ENCODE measurements at regions of chr11 and their contacts with region 1.

Region 1: DNA sequence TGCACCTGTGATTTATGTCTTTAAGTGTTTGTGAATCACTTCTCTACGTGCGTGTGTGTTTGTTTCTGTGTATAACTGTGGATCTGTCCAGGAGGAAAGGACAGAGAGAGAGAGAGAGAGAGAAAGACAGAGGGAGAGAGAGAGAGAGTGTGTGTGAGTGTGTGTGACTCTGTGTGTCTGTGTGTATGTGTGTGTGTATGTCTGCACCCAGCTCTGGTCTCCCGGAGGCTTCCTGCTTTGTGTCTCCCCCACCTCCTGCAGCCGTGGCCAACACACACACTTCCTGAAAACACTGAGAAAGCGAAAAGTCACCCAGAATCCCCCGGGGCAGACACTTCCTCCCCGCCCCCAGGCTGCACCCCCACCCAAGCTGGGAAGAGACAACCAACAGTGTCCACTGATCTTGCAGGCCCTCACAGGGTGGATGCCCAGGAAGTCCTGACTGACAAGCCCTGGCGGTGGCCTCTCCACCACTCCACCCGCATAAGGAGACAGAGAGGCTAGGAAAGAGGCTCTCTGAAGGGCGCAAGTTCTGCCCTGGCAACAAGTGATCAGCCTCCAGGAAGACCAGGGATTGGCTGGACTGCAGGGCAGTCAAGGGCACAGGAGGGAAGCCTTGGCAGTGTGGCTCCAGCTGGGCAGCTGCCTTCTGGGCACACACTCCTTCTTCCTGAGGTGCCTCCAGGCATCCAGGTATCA is 30.0 kb downstream of the ARAP1 start:
- DNase-seq: peak; percentile 91
- H3K4me3 Mint-ChIP-seq: peak overlapping the region; percentile 90
- H3K27ac Mint-ChIP-seq: peak overlapping the region; percentile 91
- H3K4me1 Mint-ChIP-seq: peaks cover 51% of the 10 kb centered on the region
- H3K27me3 Mint-ChIP-seq: no peaks in the 10 kb centered on the region

Region 2: GRCh38 chr11:72743321-72744221 is 21.4 kb after region 1 on chr11:
- CTCF ChIA-PET with region 1: interaction called, 24 read pairs
- POLR2A ChIA-PET with region 1: no interaction called
- intact Hi-C with region 1: no loop called
- DNase-seq: no peak
- H3K4me3 Mint-ChIP-seq: no peak overlapping the region
- H3K27ac Mint-ChIP-seq: peak overlapping the region; percentile 76
- H3K4me1 Mint-ChIP-seq: peaks cover 64% of the 10 kb centered on the region
- H3K27me3 Mint-ChIP-seq: no peaks in the 10 kb centered on the region

Region 3: GRCh38 chr11:72760539-72761405 is 38.6 kb after region 1 on chr11:
- CTCF ChIA-PET with region 1: interaction called, 4 read pairs
- POLR2A ChIA-PET with region 1: no interaction called
- intact Hi-C with region 1: loop called (anchors 5 kb)
- DNase-seq: no peak
- H3K4me3 Mint-ChIP-seq: no peak overlapping the region
- H3K27ac Mint-ChIP-seq: no peak overlapping the region
- H3K4me1 Mint-ChIP-seq: peaks cover 20% of the 10 kb centered on the region
- H3K27me3 Mint-ChIP-seq: no peaks in the 10 kb centered on the region

Region 4: GRCh38 chr11:72793425-72794367 is 71.5 kb after region 1 on chr11 and contains the start of gene STARD10:
- CTCF ChIA-PET with region 1: interaction called, 129 read pairs
- POLR2A ChIA-PET with region 1: interaction called, 8 read pairs
- intact Hi-C with region 1: loop called (anchors 1 kb)
- DNase-seq: peak; percentile 95
- H3K4me3 Mint-ChIP-seq: peak within 1 kb of the TSS; percentile 97
- H3K27ac Mint-ChIP-seq: peak within 1 kb of the TSS; percentile 100
- H3K4me1 Mint-ChIP-seq: peaks cover 24% of the 10 kb centered on the region
- H3K27me3 Mint-ChIP-seq: no peaks in the 10 kb centered on the region
- total RNA-seq, gene STARD10: 14.8 to 16.8 TPM

Region 5: GRCh38 chr11:72831513-72832300 is 109.5 kb after region 1 on chr11:
- CTCF ChIA-PET with region 1: interaction called, 14 read pairs
- POLR2A ChIA-PET with region 1: no interaction called
- intact Hi-C with region 1: no loop called
- DNase-seq: peak; percentile 69
- H3K4me3 Mint-ChIP-seq: no peak overlapping the region
- H3K27ac Mint-ChIP-seq: peak overlapping the region; percentile 18
- H3K4me1 Mint-ChIP-seq: peaks cover 16% of the 10 kb centered on the region
- H3K27me3 Mint-ChIP-seq: no peaks in the 10 kb centered on the region

Region 6: GRCh38 chr11:73141848-73142286 is 419.7 kb after region 1 on chr11:
- CTCF ChIA-PET with region 1: interaction called, 4 read pairs
- POLR2A ChIA-PET with region 1: no interaction called
- intact Hi-C with region 1: loop called (anchors 10 kb)
- DNase-seq: peak; percentile 65
- H3K4me3 Mint-ChIP-seq: peak overlapping the region; percentile 90
- H3K27ac Mint-ChIP-seq: peak overlapping the region; percentile 88
- H3K4me1 Mint-ChIP-seq: peaks cover 36% of the 10 kb centered on the region
- H3K27me3 Mint-ChIP-seq: no peaks in the 10 kb centered on the region

Region 7: DNA sequence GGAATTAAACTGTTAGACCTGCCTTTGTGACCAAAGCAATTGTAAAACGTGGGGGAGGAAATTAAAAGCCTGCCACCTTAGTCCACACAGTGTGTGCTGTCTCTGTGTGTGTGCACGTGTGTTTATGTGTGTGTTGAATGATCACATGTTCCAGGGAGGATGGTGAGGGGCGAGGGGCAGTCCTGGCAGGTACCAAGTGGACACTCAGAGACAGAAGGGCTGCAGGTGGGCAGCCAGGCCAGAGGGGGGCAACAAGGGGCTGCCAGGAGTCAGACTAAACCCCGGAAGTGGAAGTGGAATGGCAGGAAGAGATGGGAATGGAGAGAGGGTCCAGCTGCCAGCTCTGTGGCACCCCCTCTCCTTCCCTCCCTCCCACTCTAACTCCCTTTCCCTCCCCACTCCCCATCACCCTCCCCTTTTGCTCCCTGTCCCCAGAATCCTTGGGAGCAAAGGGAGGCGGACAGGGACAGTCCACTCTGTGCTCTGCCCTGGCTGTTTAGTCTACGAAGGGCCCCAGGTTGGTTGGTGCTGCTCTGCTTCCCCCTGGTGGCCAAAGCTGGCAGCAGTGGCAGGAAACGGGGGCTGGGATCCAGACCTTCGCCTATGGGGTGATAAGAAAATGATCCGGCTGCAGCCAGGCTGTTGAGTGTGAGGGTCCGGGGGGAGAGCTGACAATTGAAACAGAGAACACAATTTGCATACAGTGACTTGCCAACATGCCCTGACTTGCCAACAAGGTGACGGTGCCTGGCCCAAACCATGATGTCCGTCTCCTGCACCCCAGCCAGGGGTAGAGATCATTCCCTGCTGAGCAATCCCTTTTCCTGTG is 520.3 kb after region 1 on chr11:
- CTCF ChIA-PET with region 1: no interaction called
- POLR2A ChIA-PET with region 1: no interaction called
- intact Hi-C with region 1: loop called (anchors 10 kb)
- DNase-seq: peak; percentile 80
- H3K4me3 Mint-ChIP-seq: peak overlapping the region; percentile 14
- H3K27ac Mint-ChIP-seq: no peak overlapping the region
- H3K4me1 Mint-ChIP-seq: no peaks in the 10 kb centered on the region
- H3K27me3 Mint-ChIP-seq: peaks cover 6% of the 10 kb centered on the region

Region 8: GRCh38 chr11:73554671-73555320 is 832.6 kb after region 1 on chr11:
- CTCF ChIA-PET with region 1: no interaction called
- POLR2A ChIA-PET with region 1: no interaction called
- intact Hi-C with region 1: no loop called
- DNase-seq: no peak
- H3K4me3 Mint-ChIP-seq: no peak overlapping the region
- H3K27ac Mint-ChIP-seq: no peak overlapping the region
- H3K4me1 Mint-ChIP-seq: peaks cover 11% of the 10 kb centered on the region
- H3K27me3 Mint-ChIP-seq: no peaks in the 10 kb centered on the region